ENCODE measurements at regions of chr6 and their contacts with region 1.

Region 1: GRCh38 chr6:153662982-153663381 is 376.1 kb upstream of the OPRM1 start:
- DNase-seq: no peak
- H3K4me3 ChIP-seq: no peak overlapping the region
- H3K27ac ChIP-seq: no peak overlapping the region
- H3K4me1 ChIP-seq: no peaks in the 10 kb centered on the region
- H3K27me3 ChIP-seq: no peaks in the 10 kb centered on the region
- CTCF ChIP-seq: no peak

Region 2: DNA sequence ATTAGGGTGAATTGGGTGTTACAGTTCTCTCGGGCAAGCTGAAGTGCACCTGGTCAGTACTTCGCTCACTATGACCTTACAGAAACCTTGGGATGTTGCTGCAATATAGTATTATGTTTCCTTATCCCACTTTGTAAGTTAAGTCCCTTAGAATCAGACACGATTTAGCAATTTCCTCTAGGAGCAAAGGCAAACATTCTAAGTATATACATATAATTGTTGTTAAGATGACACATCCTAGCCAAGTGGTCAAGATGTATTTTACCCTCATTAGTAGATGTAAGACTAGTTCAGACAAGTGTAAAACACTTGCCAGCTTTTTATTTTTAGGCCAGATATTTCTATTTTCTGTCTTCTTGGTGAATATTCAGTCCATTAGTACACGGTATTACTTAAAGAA is 500.8 kb before region 1 on chr6:
- CTCF ChIA-PET with region 1: no interaction called
- POLR2A ChIA-PET with region 1: no interaction called
- intact Hi-C with region 1: no loop called
- DNase-seq: no peak
- H3K4me3 ChIP-seq: no peak overlapping the region
- H3K27ac ChIP-seq: no peak overlapping the region
- H3K4me1 ChIP-seq: peaks cover 13% of the 10 kb centered on the region
- H3K27me3 ChIP-seq: no peaks in the 10 kb centered on the region
- CTCF ChIP-seq: no peak

Region 3: DNA sequence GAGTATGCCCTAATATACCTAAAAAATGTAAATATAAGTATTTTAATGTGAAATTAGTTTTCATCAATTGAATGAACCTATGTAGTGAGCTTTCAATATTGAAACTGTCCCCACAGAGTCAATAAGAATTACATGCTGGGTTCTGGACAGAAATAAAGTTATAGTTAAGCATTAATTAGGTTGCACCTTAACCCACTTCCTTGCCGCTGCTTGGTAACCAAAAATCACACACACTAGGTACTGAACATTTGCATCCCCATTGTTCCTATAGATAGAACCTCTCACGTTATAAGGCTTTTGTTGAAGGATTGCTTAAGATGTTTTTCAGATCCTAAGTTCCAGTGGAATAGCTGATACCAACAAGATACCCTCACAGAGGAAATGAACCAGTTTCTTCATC is 138.9 kb after region 1 on chr6:
- CTCF ChIA-PET with region 1: no interaction called
- POLR2A ChIA-PET with region 1: no interaction called
- intact Hi-C with region 1: no loop called
- DNase-seq: no peak
- H3K4me3 ChIP-seq: no peak overlapping the region
- H3K27ac ChIP-seq: no peak overlapping the region
- H3K4me1 ChIP-seq: no peaks in the 10 kb centered on the region
- H3K27me3 ChIP-seq: no peaks in the 10 kb centered on the region
- CTCF ChIP-seq: no peak

Region 4: GRCh38 chr6:154039231-154039842 is 376.4 kb after region 1 on chr6 and contains the start of gene OPRM1:
- CTCF ChIA-PET with region 1: no interaction called
- POLR2A ChIA-PET with region 1: no interaction called
- intact Hi-C with region 1: loop called (anchors 10 kb)
- DNase-seq: no peak
- H3K4me3 ChIP-seq: no peak within 1 kb of the TSS
- H3K27ac ChIP-seq: no peak within 1 kb of the TSS
- H3K4me1 ChIP-seq: no peaks in the 10 kb centered on the region
- H3K27me3 ChIP-seq: no peaks in the 10 kb centered on the region
- CTCF ChIP-seq: no peak
- total RNA-seq, gene OPRM1: not detected in 2 replicates